Activated T-helper 2 cell treated with anti-CD3 and anti-CD28 coated beads, Interferon-gamma antibody, Interleukin-2, Interleukin-4, amounts not matched to agents 10 μg/mL and 5 μg/mL and 100 μg/mL, durations not matched to agents 14 hours and 24 hours and 36 hours (primary cell): ENCODE measurements at regions of chr2 and their contacts with region 1.

Region 1: DNA sequence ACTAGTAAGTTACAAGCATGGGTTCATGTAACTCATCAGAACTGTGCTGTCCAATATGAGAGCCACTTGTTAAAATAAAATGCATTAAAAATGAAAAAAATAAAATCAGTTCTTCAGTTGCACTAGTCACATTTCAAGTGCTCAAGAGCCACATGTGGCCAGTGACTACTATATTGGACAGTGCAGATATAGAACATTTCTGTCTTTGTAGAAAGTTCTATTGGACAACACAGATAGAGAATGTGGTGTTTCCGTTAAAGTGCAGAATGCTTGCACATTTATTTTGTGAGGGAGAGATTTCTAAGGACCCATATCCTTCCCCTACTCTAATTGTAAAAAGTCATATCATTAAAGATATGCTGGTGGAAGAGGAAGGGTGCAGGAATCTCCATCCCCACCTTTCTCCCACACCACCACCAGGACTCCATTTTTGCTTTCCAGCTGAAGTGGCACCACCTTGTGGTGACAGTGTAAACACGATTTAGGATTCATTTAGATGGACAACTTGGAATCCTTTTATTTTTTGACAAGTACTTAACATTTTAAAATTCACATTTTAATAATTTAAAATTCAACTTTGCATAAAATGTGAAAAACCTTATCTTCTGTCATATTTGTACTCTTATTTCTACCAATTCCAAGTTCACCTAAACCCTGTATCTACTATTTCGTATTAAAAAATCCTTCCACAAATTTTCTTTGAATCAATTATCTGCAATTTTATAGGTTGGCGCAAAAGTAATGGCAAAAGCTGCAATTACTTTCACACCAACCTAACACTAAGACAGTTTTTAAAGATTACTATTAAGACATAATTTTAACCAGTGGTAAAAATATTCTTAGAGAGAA is 9.4 kb upstream of the CD302 start:
- DNase-seq: no peak
- H3K4me3 Mint-ChIP-seq: no peak overlapping the region
- H3K27ac Mint-ChIP-seq: no peak overlapping the region
- H3K4me1 Mint-ChIP-seq: no peaks in the 10 kb centered on the region
- H3K27me3 Mint-ChIP-seq: no peaks in the 10 kb centered on the region

Region 2: DNA sequence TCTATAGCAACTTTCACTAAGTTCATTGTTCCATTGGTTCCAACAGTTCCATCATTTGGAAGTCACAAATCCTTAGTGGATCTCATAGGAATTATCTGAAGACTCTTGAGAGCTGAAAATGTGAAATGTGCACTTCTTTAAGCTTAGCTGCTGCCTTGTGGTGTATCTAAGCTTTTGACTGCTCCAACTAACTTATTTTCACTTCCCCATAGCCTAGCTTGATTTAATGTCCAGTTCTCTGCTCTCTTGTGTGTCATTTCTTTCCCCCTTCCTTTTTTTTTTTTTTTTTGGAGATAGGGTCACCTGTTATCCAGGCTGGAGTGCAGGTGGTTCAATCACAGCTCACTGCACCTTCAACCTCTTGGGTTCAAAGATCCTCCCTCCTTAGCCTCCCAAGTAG is 25.5 kb after region 1 on chr2:
- intact Hi-C with region 1: no loop called
- DNase-seq: no peak
- H3K4me3 Mint-ChIP-seq: no peak overlapping the region
- H3K27ac Mint-ChIP-seq: no peak overlapping the region
- H3K4me1 Mint-ChIP-seq: no peaks in the 10 kb centered on the region
- H3K27me3 Mint-ChIP-seq: no peaks in the 10 kb centered on the region

Region 3: GRCh38 chr2:159867567-159868361 is 60.4 kb after region 1 on chr2:
- intact Hi-C with region 1: no loop called
- DNase-seq: no peak
- H3K4me3 Mint-ChIP-seq: no peak overlapping the region
- H3K27ac Mint-ChIP-seq: no peak overlapping the region
- H3K4me1 Mint-ChIP-seq: no peaks in the 10 kb centered on the region
- H3K27me3 Mint-ChIP-seq: no peaks in the 10 kb centered on the region

Region 4: GRCh38 chr2:159968279-159968900 is 161.0 kb after region 1 on chr2:
- intact Hi-C with region 1: loop called (anchors 10 kb)
- DNase-seq: no peak
- H3K4me3 Mint-ChIP-seq: no peak overlapping the region
- H3K27ac Mint-ChIP-seq: no peak overlapping the region
- H3K4me1 Mint-ChIP-seq: no peaks in the 10 kb centered on the region
- H3K27me3 Mint-ChIP-seq: no peaks in the 10 kb centered on the region